Right ventricle myocardium inferior (tissue), 1 donor: ENCODE measurements at regions of chr9 and their contacts with region 1.

Region 1: GRCh38 chr9:32968101-32969011 is 33.1 kb downstream of the APTX start:
- DNase-seq: no peak
- ATAC-seq: no peak

Region 2: GRCh38 chr9:32378993-32379729 is 589.2 kb before region 1 on chr9:
- intact Hi-C with region 1: loop called (anchors 5 kb)
- DNase-seq: no peak
- ATAC-seq: peak; percentile 87

Region 3: GRCh38 chr9:32579706-32580331 is 388.5 kb before region 1 on chr9:
- intact Hi-C with region 1: loop called (anchors 2 kb)
- DNase-seq: peak; percentile 69
- ATAC-seq: no peak

Region 4: GRCh38 chr9:32589083-32589723 is 379.2 kb before region 1 on chr9:
- intact Hi-C with region 1: loop called (anchors 2 kb)
- DNase-seq: no peak
- ATAC-seq: no peak

Region 5: GRCh38 chr9:32764140-32764539 is 204.2 kb before region 1 on chr9:
- intact Hi-C with region 1: loop called (anchors 10 kb)
- DNase-seq: no peak
- ATAC-seq: no peak

Region 6: GRCh38 chr9:32841314-32841713 is 127.0 kb before region 1 on chr9:
- intact Hi-C with region 1: loop called (anchors 10 kb)
- DNase-seq: no peak
- ATAC-seq: no peak

Region 7: DNA sequence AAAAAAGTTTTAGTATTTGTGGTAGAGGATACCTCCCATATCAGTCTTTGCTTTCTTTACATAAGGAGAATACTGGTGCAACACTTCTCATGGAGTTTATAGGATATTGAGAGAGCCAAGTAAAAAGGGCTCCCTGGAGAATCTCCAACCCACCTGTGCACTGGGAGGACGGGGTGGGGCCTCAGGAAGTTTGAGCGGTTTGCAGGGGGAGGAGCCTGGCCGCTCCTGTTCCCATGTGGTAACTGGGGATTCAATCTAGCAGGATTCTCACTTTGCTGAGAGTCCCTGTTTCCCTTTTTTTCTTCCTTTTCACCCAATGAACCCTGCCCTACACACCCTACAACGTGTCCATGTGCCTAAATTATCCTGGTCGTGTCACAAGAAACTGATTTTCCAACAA is 49.7 kb before region 1 on chr9:
- intact Hi-C with region 1: no loop called
- DNase-seq: no peak
- ATAC-seq: no peak